Natural killer cell (primary cell): ENCODE measurements at regions of chr19 and their contacts with region 1.

Region 1: GRCh38 chr19:53365134-53365898 is at the start of gene ZNF525:
- DNase-seq: peak; percentile 97 to 99
- ATAC-seq: peak; percentile 99 to 100 (median 100)
- H3K4me3 ChIP-seq: peak within 1 kb of the TSS; percentile 73
- H3K4me3 Mint-ChIP-seq: peak within 1 kb of the TSS; percentile 94
- H3K27ac ChIP-seq: peak within 1 kb of the TSS; percentile 78
- H3K27ac Mint-ChIP-seq: peak within 1 kb of the TSS; percentile 85 to 90
- H3K4me1 ChIP-seq: peaks cover 6% of the 10 kb centered on the region
- H3K4me1 Mint-ChIP-seq: peaks cover 30 to 36% of the 10 kb centered on the region in 2 donors
- H3K27me3 ChIP-seq: no peaks in the 10 kb centered on the region
- H3K27me3 Mint-ChIP-seq: no peaks in the 10 kb centered on the region
- CTCF ChIP-seq: peak; percentile 65
- total RNA-seq, gene ZNF525: 20.7 to 27.0 (median 21.8) TPM

Region 2: GRCh38 chr19:53333463-53334449 is 31.6 kb before region 1 on chr19 and contains the start of gene ZNF845:
- intact Hi-C with region 1: loop called (anchors 1 kb)
- DNase-seq: peak; percentile 95 to 99
- ATAC-seq: peak; percentile 98 to 100 (median 98)
- H3K4me3 ChIP-seq: peak within 1 kb of the TSS; percentile 88
- H3K4me3 Mint-ChIP-seq: peak within 1 kb of the TSS; percentile 95
- H3K27ac ChIP-seq: peak within 1 kb of the TSS; percentile 62
- H3K27ac Mint-ChIP-seq: peak within 1 kb of the TSS; percentile 70 to 90
- H3K4me1 ChIP-seq: peaks cover 23% of the 10 kb centered on the region
- H3K4me1 Mint-ChIP-seq: peaks cover 15 to 25% of the 10 kb centered on the region in 2 donors
- H3K27me3 ChIP-seq: no peaks in the 10 kb centered on the region
- H3K27me3 Mint-ChIP-seq: peaks cover 9 to 16% of the 10 kb centered on the region in 2 donors
- CTCF ChIP-seq: no peak
- total RNA-seq, gene ZNF845: 8.7 to 13.2 (median 9.0) TPM

Region 3: DNA sequence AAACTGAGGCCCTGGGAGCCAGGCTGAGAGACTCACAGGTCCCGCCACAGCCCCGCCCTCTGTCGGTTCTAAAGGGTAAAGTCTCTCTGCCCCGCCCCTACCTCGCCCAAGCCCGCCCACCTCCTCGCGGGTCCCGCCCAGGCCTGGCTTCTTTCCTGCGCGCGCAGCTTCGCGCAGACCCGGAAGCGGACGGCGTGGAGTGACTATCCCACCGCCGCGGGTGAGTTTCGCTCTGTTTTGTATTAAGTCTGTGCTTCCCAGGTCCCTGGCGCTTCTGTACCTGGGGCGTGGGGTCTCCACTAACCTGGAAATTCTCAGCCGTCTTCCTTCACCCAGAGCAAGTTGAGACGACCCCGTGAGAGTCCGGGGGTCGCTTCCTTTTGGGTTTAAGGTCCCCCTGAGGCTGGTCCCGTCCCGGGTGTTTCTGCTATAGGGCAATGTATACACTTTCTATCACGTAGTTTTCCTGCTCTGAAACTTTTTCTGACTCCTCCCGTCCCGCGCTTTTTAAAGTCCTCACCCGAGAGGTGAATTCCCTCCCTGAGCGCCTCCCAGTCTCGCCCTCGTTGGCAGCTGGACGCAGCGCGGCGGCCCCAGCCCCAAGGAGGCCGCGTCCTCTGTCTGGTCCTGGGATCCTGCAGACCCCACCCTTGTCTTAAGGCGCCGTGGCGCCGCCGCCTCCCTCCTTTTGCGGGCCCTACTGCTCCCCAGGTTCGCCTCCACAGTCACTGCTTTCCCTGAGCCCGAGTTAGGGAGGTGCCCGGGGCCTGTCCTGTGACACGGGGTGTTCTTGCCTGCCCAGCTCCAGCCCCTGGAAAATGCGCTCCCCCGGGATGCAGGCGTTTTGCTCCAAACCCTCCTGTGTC is 29.9 kb after region 1 on chr19 and contains the start of gene ZNF765:
- intact Hi-C with region 1: loop called (anchors 1 kb)
- DNase-seq: peak; percentile 97 to 99
- ATAC-seq: peak; percentile 97 to 99 (median 98)
- H3K4me3 ChIP-seq: peak within 1 kb of the TSS; percentile 74
- H3K4me3 Mint-ChIP-seq: peak within 1 kb of the TSS; percentile 97
- H3K27ac ChIP-seq: peak within 1 kb of the TSS; percentile 62
- H3K27ac Mint-ChIP-seq: peak within 1 kb of the TSS; percentile 90 to 93
- H3K4me1 ChIP-seq: peaks cover 16% of the 10 kb centered on the region
- H3K4me1 Mint-ChIP-seq: peaks cover 19% of the 10 kb centered on the region in 2 donors
- H3K27me3 ChIP-seq: no peaks in the 10 kb centered on the region
- H3K27me3 Mint-ChIP-seq: no peaks in the 10 kb centered on the region
- CTCF ChIP-seq: peak; percentile 57
- total RNA-seq, gene ZNF765: 8.5 to 16.4 (median 11.8) TPM

Region 4: GRCh38 chr19:53520550-53521372 is 155.4 kb after region 1 on chr19:
- intact Hi-C with region 1: loop called (anchors 1 kb)
- DNase-seq: peak; percentile 73 to 96
- ATAC-seq: peak; percentile 98 to 100 (median 99)
- H3K4me3 ChIP-seq: peak overlapping the region; percentile 82
- H3K4me3 Mint-ChIP-seq: peak overlapping the region; percentile 100
- H3K27ac ChIP-seq: peak overlapping the region; percentile 84
- H3K27ac Mint-ChIP-seq: peak overlapping the region; percentile 93 to 99
- H3K4me1 ChIP-seq: peaks cover 17% of the 10 kb centered on the region
- H3K4me1 Mint-ChIP-seq: peaks cover 11 to 13% of the 10 kb centered on the region in 2 donors
- H3K27me3 ChIP-seq: no peaks in the 10 kb centered on the region
- H3K27me3 Mint-ChIP-seq: no peaks in the 10 kb centered on the region
- CTCF ChIP-seq: no peak